T-cell (primary cell): ENCODE measurements at regions of chrX and their contacts with region 1.

Region 1: GRCh38 chrX:41952102-41952501 is 28.7 kb upstream of the CASK start:
- DNase-seq: no peak
- ATAC-seq: no peak
- H3K4me3 ChIP-seq: no peak overlapping the region
- H3K4me3 Mint-ChIP-seq: no peak overlapping the region
- H3K27ac ChIP-seq: no peak overlapping the region
- H3K27ac Mint-ChIP-seq: no peak overlapping the region
- H3K4me1 ChIP-seq: no peaks in the 10 kb centered on the region
- H3K4me1 Mint-ChIP-seq: peaks cover 0 to 2% (median under 1%) of the 10 kb centered on the region in 3 donors
- H3K27me3 ChIP-seq: no peaks in the 10 kb centered on the region
- H3K27me3 Mint-ChIP-seq: peaks cover 0 to 5% of the 10 kb centered on the region in 2 donors

Region 2: GRCh38 chrX:41870719-41871151 is 81.4 kb before region 1 on chrX:
- CTCF ChIA-PET with region 1: interaction called in 1 of 2 experiments, 10 read pairs
- POLR2A ChIA-PET with region 1: no interaction called
- DNase-seq: no peak
- ATAC-seq: no peak
- H3K4me3 ChIP-seq: no peak overlapping the region
- H3K4me3 Mint-ChIP-seq: no peak overlapping the region
- H3K27ac ChIP-seq: no peak overlapping the region
- H3K27ac Mint-ChIP-seq: no peak overlapping the region
- H3K4me1 ChIP-seq: peaks cover 2 to 16% of the 10 kb centered on the region in 2 experiments
- H3K4me1 Mint-ChIP-seq: peaks cover 30 to 77% (median 58%) of the 10 kb centered on the region in 3 donors
- H3K27me3 ChIP-seq: no peaks in the 10 kb centered on the region
- H3K27me3 Mint-ChIP-seq: peaks cover 0 to 10% of the 10 kb centered on the region in 2 donors

Region 3: DNA sequence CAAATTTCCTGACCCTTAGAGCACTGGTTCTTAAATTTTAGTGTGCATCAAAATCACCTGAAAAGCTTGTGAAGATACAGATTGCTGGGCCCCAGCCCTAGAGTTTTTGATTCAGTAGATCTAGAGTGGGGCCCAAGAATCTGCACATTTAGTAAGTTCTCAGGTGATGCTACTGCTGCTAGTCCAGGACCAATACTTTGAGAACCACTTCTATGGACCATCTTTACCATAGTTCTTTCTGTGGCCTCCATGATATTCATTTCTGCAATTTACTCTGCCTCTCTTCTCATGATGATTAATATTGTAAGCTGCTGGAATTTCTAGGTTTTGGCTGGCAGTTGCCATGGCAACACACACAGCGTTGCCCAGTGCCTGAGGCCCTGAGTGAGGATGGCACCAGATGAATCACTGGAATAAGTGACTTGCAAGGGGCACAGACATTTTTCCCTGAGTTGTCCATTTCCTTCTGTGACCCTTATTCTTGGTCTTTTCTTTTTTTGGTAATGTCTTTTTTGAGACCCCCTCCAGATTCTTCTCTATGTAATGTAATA is 742.2 kb after region 1 on chrX:
- CTCF ChIA-PET with region 1: no interaction called
- POLR2A ChIA-PET with region 1: no interaction called
- DNase-seq: no peak
- ATAC-seq: no peak
- H3K4me3 ChIP-seq: no peak overlapping the region
- H3K4me3 Mint-ChIP-seq: no peak overlapping the region
- H3K27ac ChIP-seq: no peak overlapping the region
- H3K27ac Mint-ChIP-seq: no peak overlapping the region
- H3K4me1 ChIP-seq: no peaks in the 10 kb centered on the region
- H3K4me1 Mint-ChIP-seq: peaks cover 0 to 2% (median 0%) of the 10 kb centered on the region in 3 donors
- H3K27me3 ChIP-seq: no peaks in the 10 kb centered on the region
- H3K27me3 Mint-ChIP-seq: peaks cover 0 to 14% of the 10 kb centered on the region in 2 donors